AG04450 (cell line): ENCODE measurements at regions of chr14 and their contacts with region 1.

Region 1: GRCh38 chr14:54642801-54643697 is 76.1 kb downstream of the SAMD4A start:
- DNase-seq: no peak
- H3K4me3 ChIP-seq: no peak overlapping the region
- H3K27ac ChIP-seq: no peak overlapping the region
- H3K27me3 ChIP-seq: no peaks in the 10 kb centered on the region
- CTCF ChIP-seq: peak; percentile 48; the same call in 1 of the 2 replicates

Region 2: DNA sequence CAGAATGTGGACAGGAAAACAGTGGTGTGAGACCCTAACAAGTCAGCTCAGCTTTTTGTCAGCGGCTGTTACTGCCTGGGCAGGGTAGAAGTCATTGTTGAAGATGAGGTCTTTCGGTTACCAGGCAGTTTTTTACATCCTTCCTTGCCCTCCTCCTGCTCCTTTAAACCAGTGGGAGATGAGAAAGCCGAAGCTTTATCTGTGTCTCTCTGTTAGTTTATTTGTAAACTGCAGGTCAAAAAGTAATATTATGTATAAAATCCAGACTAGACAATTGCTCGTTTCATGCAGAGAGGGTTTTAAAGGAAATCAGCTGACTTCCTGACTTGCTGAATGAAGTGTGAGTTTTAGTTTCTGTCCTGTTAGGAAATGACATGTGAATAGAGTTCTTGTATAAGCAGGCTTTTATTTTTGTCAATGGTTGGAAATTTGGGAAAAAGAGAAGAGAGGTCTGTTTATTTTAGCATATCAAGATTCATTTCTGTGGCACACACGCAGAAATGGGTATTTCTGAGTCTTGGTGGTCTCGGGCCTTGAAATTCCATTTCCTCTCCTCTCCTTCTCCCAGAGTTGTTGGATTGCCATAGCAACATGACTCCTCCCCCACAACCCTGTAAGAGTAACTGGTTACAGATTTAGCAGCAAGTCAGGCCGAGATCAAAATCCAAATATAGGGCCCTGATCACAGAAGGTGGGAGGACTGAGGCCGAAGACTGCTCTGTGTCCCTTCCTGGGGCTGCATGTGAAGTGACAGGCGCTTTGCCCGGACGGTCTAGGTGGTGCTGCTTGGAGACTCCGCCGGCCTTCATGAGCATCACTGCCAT is 15.3 kb before region 1 on chr14:
- CTCF ChIA-PET with region 1: interaction called, 12 read pairs
- POLR2A ChIA-PET with region 1: interaction called, 3 read pairs
- DNase-seq: no peak
- H3K4me3 ChIP-seq: peak overlapping the region; percentile 22
- H3K27ac ChIP-seq: peak overlapping the region; percentile 74
- H3K27me3 ChIP-seq: no peaks in the 10 kb centered on the region
- CTCF ChIP-seq: no peak

Region 3: DNA sequence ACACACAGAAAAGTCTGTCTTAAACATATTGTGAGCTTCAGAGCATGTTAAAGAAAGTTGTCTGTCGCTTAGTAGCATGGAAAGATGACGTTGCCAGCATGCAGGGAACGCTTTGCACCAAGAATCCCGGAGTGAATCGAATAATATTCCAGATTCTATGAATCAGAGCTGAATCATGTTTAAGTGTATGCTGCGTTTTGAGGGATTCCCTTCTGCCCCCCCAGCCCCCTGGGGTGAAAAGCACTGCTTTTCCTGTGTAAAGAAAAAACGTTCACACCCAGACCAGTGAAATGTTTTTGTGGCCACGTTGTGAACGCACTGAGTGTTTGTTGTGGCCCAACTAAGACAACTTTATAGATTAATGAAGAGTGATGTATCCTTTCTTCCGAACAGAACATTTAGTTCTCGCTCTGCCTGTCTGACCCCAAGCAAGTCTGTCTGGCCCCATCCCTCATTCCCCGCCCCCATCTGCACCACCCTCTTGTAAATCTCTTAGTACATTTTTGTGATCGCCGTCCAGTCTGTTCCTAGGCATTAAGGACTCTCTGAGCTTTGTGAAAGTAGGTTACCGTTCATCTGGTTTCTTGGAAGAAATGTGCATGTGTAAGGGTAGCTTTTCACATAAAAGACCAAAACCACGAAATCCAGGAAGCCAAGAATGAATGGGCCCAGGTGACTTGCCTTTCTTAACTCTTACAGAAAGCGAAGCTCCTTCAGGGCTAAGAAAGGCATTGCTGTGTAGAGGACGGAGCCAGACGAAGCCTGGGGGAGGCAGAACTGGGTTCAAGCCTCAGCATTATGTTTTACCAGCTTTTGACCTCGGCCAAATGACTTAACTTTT is 26.9 kb after region 1 on chr14:
- CTCF ChIA-PET with region 1: interaction called, 12 read pairs
- POLR2A ChIA-PET with region 1: no interaction called
- DNase-seq: peak; percentile 15
- H3K4me3 ChIP-seq: no peak overlapping the region
- H3K27ac ChIP-seq: no peak overlapping the region
- H3K27me3 ChIP-seq: no peaks in the 10 kb centered on the region
- CTCF ChIP-seq: no peak